BJ (cell line): ENCODE measurements at regions of chr1 and their contacts with region 1.

Region 1: GRCh38 chr1:65059930-65060538 is 88.0 kb upstream of the AK4 start:
- DNase-seq: no peak
- H3K4me3 ChIP-seq: no peak overlapping the region
- H3K27me3 ChIP-seq: no peaks in the 10 kb centered on the region
- CTCF ChIP-seq: peak; percentile 59

Region 2: DNA sequence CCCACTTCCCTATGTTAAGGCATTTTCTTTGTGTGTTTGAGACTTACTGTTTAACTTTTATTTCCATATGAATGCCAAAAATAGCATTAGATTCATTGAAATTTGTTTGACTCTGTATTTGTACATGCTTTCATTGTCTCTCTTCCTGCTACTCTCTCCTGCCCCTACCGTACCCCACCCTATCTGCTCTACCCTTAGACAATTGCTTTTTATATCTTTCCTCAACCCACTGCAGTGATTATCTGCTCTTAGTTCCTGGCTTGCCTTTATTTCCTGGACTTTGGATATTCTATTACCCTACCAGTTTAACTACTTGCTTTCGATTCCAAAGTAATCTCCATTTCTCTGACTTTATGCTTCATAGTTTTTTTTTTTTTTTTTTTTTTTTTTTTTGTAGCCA is 304.7 kb before region 1 on chr1:
- CTCF ChIA-PET with region 1: no interaction called
- POLR2A ChIA-PET with region 1: no interaction called
- DNase-seq: no peak
- H3K4me3 ChIP-seq: no peak overlapping the region
- H3K27me3 ChIP-seq: no peaks in the 10 kb centered on the region
- CTCF ChIP-seq: no peak

Region 3: GRCh38 chr1:65011983-65012382 is 48.1 kb before region 1 on chr1:
- CTCF ChIA-PET with region 1: no interaction called
- POLR2A ChIA-PET with region 1: no interaction called
- DNase-seq: no peak
- H3K4me3 ChIP-seq: no peak overlapping the region
- H3K27me3 ChIP-seq: no peaks in the 10 kb centered on the region
- CTCF ChIP-seq: no peak

Region 4: GRCh38 chr1:65075123-65075976 is 15.3 kb after region 1 on chr1:
- CTCF ChIA-PET with region 1: interaction called, 18 read pairs
- POLR2A ChIA-PET with region 1: no interaction called
- DNase-seq: no peak
- H3K4me3 ChIP-seq: no peak overlapping the region
- H3K27me3 ChIP-seq: peaks cover 8% of the 10 kb centered on the region; the same call in 1 of the 2 replicates
- CTCF ChIP-seq: peak; percentile 81